Posterior vena cava (tissue), 2 donors: ENCODE measurements at regions of chr13 and their contacts with region 1.

Region 1: DNA sequence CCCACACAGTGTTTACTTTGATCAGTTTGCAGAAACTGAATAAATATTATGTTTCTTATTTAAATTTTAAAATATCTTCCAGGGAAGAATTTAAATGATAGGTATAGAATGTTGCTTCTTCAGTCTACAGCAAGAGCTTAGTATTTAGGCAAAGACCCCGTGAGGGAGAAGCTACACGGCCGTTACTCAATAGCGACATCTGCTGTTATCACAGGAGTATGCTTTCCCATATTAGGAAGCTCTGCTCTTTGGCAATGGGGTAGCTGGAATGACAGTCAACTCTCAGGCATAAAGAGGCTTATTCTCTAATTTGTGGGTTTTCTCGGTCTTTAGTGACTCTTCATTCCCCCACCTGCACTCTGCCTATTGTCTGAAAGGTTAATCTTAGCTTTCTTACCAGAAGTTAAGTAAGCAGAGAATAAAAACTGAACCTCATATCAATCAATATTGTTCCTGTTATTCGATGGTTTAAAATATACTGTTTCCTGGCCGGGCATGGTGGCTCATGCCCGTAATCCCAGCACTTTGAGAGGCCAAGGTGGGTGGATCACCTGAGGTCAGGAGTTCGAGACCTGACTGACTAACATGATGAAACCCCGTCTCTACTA is 13.2 kb upstream of the LHFPL6 start:
- DNase-seq: no peak

Region 2: DNA sequence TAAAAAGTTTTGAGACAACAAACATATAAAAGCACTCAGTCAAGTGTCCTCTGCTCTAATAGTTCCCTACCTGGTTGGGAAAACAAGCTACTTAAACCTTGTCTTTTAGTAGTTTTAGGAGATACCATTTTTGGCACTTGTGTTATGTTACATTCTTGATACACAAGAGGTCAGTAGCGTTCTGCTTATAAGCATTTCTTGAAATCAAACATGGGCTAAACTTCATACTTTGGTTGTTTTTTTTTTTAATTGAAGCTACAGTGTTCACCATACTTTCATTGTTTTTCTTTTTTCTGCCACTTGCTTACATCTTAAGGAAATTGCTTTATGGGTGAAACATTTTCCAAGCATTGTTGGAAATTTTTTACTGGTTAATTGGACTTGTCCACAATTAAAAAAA is 565.0 kb before region 1 on chr13:
- intact Hi-C with region 1: loop called in 1 of 2 experiments (anchors 10 kb)
- DNase-seq: no peak